ENCODE measurements at regions of chr10 and their contacts with region 1.

Region 1: DNA sequence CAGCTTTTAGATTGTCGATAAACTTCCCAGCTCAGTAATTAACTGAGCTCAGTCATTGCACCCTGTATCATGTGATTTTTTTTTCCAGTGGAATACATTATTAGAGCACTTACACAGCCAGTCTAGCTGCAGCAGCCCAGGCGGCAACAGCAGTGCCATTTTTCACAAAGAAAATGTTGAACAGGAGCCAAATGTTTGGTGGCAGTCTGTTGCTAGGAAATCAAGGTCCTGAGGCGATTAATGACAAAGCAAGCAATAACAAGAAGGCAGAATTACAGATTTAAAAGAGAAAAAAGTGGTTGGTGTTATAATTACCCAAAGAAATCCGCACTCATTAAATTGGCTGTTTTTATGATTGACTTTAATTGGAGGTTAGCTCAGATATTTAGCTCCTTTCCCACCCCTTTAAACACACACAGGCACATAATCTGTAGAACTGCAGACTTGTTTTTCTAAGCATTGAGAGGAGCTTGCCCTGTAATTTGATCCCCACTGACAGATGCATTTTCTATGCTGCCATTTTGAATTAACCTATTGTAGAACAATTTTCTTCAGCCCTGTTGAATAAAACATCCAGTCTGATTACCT is 267.4 kb downstream of the ADK start:
- DNase-seq: peak in 5 of 6 donors; percentile 45 to 67 (median 61)
- ATAC-seq: peak; percentile 92 to 98 (median 96)
- H3K4me3 ChIP-seq: peak overlapping the region in 1 of 4 donors; percentile 5
- H3K27ac ChIP-seq: peak overlapping the region in 3 of 4 donors; percentile 0 to 72 (median 54)
- H3K4me1 ChIP-seq: peaks cover 5 to 15% (median 11%) of the 10 kb centered on the region in 3 donors
- H3K27me3 ChIP-seq: no peaks in the 10 kb centered on the region
- CTCF ChIP-seq: no peak

Region 2: DNA sequence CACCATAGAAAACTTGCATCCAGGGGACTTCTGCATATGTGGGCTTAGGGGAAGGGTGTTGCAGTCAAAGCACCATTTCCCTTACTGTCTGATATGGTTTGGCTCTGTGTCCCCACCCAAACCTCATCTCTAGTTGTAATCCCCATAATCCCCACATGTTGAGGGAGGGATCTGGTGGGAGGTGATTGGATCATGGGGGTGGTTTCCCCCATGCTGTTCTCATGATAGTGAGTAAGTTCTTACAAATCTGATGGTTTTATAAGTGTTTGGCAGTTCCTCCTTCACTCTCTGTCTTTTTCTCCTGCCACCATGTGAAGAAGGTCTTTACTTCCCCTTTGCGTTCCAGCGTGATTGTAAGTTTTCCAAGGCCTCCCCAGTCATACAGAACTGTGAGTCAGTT is 90.0 kb before region 1 on chr10:
- intact Hi-C with region 1: loop called in 1 of 3 experiments (anchors 5 kb)
- DNase-seq: no peak
- ATAC-seq: peak in 1 of 4 donors; percentile 48
- H3K4me3 ChIP-seq: no peak overlapping the region
- H3K27ac ChIP-seq: no peak overlapping the region
- H3K4me1 ChIP-seq: no peaks in the 10 kb centered on the region
- H3K27me3 ChIP-seq: no peaks in the 10 kb centered on the region
- CTCF ChIP-seq: no peak

Measured in pancreas (tissue), 10 donors.